ENCODE measurements at regions of chr17 and their contacts with region 1.

Region 1: DNA sequence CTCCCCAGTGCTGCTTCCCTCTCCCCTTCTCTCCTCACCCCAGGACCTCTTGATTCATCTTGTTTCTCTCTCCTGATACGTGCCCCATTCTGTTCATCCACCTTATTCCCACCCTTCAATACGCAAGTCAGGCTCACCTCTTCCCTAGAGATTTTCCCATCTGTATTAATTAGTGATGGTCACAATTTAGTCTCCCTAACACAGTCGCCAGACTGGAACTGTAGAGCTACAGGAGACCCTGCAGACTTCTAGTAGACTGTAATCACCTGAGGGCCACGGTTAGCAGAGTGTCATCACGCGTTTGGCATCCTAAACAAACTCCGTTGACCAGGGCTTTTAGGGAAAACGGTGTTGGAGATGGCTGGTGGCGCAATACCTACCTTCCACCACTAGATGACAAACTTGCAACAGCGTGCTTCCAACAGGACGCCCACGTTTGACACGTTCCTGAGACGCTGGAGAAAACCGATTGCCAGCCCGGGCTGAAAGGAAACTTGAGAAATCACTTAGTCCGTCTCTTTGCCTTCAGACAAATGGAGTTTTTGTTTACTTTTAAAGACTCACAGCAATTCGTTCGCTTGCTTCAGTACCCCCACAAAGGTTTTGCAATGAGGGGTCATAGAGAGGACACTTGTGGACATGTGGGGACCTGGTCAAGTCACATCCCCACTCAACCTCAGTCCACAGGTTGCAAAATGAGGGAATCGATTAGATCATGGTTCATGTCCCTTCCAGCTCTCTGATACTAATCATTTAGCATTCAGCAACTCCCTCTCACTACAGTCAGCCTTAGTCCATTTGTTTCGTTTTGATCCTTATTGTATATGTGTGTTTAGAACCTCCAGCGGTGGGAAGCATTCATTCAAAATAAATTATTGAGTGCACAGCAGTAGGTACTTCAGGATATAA is 20.6 kb downstream of the MYL4 start:
- DNase-seq: peak; percentile 93
- H3K4me3 ChIP-seq: peak overlapping the region; percentile 46
- H3K27ac ChIP-seq: peak overlapping the region; percentile 75
- H3K27me3 ChIP-seq: no peaks in the 10 kb centered on the region
- CTCF ChIP-seq: peak; percentile 100

Region 2: DNA sequence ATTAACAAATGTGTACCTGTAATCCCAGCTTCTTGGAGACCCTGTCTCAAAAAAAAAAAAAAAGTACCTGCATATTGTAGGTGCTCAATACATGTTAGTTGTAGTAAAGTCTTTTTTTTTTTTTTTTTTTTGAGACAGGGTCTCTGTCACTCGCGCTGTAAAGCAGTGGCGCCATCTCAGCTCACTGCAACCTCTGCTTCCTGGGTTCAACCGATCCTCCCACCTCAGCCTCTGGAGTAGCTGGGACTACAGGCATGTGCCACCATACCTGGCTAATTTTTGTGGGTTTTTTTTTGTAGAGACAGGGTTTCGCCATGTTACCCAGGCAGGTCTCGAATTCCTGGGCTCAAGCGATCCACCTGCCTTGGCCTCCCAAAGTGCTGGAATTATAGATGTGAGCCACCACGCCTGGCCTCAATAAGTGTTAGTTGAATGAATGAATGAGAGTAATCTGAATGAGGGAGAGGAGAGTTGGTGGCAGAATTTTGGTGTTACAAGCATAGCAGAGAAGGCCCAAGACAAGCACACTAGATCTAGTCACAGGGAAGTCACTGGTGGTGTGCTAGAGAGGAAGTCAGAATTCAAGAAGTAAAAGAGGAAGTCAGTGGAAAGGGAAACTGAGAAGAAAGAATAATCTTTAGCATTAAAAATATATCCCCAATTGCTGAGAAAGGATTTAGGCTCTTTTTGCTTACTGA is 30.0 kb before region 1 on chr17:
- CTCF ChIA-PET with region 1: no interaction called
- POLR2A ChIA-PET with region 1: no interaction called
- DNase-seq: no peak
- H3K4me3 ChIP-seq: no peak overlapping the region
- H3K27ac ChIP-seq: no peak overlapping the region
- H3K27me3 ChIP-seq: peaks cover 2% of the 10 kb centered on the region
- CTCF ChIP-seq: no peak

Region 3: GRCh38 chr17:47239619-47240374 is 10.0 kb after region 1 on chr17:
- CTCF ChIA-PET with region 1: interaction called, 10 read pairs
- POLR2A ChIA-PET with region 1: no interaction called
- DNase-seq: peak; percentile 83
- H3K4me3 ChIP-seq: no peak overlapping the region
- H3K27ac ChIP-seq: peak overlapping the region; percentile 90
- H3K27me3 ChIP-seq: no peaks in the 10 kb centered on the region
- CTCF ChIP-seq: no peak

Region 4: GRCh38 chr17:47267354-47267828 is 37.6 kb after region 1 on chr17:
- CTCF ChIA-PET with region 1: no interaction called
- POLR2A ChIA-PET with region 1: no interaction called
- DNase-seq: peak; percentile 59
- H3K4me3 ChIP-seq: no peak overlapping the region
- H3K27ac ChIP-seq: peak overlapping the region; percentile 75
- H3K27me3 ChIP-seq: no peaks in the 10 kb centered on the region
- CTCF ChIP-seq: no peak

Region 5: DNA sequence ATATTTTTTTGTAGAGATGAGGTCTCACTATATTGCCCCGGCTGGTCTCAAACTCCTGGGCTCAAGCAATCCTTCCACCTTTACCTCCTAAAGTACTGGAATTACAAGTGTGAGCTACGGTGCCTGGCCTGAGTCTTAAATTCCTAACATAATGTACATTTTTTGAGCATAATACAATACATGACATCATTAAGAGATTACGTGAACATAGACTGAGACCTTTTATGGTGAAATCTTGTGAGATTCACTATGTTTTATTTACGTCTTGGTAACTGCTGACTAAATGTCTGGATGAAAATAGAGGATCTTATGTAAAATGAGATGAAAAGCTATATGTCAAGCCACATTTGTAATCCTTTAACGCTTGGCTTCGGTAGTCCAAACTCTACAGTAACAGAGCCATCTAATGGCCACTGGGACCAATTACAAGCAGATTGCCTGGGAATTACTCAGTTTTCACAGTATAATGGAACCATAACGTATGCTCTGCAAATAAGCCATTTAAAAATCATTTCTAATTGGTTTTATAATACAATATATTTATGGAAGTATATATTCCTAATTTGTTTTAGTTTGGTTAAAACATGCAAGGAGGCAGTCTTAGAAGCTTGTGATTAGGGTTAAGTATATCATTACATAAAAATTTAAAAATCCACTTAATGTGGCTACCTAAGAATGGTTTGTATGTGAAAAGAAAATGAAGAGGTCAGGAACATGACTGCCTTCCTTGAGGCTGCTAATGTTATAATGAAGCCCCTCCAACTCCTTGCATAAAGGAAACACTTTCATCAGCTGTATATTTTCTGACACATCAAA is 85.9 kb after region 1 on chr17:
- CTCF ChIA-PET with region 1: interaction called, 52 read pairs
- POLR2A ChIA-PET with region 1: interaction called, 5 read pairs
- DNase-seq: peak; percentile 92
- H3K4me3 ChIP-seq: no peak overlapping the region
- H3K27ac ChIP-seq: peak overlapping the region; percentile 91
- H3K27me3 ChIP-seq: no peaks in the 10 kb centered on the region
- CTCF ChIP-seq: peak; percentile 82